ENCODE measurements at regions of chr12 and their contacts with region 1.

Region 1: DNA sequence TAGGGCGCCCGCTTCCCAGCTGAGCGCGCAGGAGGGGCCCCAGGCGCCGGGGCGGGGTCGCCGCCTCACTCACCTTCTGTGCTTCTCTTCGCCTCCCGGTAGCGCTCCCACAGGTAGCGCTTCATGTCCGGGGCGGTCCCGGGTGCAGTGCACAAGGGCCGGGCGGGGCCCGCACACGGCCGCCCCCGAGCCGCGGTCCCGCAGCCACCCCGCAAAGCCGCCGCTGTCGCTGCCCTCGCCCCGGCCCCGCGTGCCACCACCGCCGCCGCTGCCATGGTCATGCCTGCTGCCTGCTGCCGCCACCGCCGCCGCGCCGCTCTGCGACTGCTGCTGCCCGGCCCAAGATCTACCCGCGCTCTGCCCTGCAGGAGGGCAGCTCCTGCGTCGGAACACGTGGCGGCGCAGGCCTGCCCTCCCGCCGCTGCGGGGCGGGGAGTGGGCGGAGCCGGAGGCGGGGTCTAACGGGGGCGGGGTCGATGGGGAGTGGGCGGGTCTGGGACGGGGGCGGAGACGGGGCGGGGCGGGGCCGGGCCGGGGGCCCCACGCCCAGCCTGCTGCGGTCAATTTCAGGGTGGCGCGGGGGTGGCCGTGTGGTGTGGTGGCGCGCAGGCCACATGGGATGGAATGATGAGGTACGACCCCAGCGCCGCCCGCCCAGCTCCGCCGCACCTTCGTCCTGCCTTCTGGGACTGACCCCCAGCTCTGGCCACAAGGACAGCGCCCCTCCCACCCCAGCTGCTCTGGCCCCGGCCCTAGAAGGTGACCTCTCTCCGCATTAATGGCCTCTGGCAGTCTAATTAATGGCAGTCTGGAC is at the start of gene NT5DC3:
- DNase-seq: peak; percentile 75
- H3K4me3 Mint-ChIP-seq: peak within 1 kb of the TSS; percentile 90
- H3K27ac Mint-ChIP-seq: peak within 1 kb of the TSS; percentile 83
- H3K4me1 Mint-ChIP-seq: peaks cover 24% of the 10 kb centered on the region
- H3K27me3 Mint-ChIP-seq: peaks cover 24% of the 10 kb centered on the region
- total RNA-seq, gene NT5DC3: 13.2 and 14.2 TPM in 2 replicates

Region 2: GRCh38 chr12:103279444-103279843 is 561.6 kb before region 1 on chr12:
- intact Hi-C with region 1: loop called (anchors 10 kb)
- DNase-seq: peak; percentile 17
- H3K4me3 Mint-ChIP-seq: no peak overlapping the region
- H3K27ac Mint-ChIP-seq: peak overlapping the region; percentile 15
- H3K4me1 Mint-ChIP-seq: peaks cover 23% of the 10 kb centered on the region
- H3K27me3 Mint-ChIP-seq: peaks cover 14% of the 10 kb centered on the region

Region 3: GRCh38 chr12:103924761-103925641 is 83.9 kb after region 1 on chr12:
- intact Hi-C with region 1: loop called (anchors 1 kb)
- DNase-seq: peak; percentile 51
- H3K4me3 Mint-ChIP-seq: peak overlapping the region; percentile 70
- H3K27ac Mint-ChIP-seq: peak overlapping the region; percentile 81
- H3K4me1 Mint-ChIP-seq: peaks cover 50% of the 10 kb centered on the region
- H3K27me3 Mint-ChIP-seq: peaks cover 2% of the 10 kb centered on the region

Region 4: DNA sequence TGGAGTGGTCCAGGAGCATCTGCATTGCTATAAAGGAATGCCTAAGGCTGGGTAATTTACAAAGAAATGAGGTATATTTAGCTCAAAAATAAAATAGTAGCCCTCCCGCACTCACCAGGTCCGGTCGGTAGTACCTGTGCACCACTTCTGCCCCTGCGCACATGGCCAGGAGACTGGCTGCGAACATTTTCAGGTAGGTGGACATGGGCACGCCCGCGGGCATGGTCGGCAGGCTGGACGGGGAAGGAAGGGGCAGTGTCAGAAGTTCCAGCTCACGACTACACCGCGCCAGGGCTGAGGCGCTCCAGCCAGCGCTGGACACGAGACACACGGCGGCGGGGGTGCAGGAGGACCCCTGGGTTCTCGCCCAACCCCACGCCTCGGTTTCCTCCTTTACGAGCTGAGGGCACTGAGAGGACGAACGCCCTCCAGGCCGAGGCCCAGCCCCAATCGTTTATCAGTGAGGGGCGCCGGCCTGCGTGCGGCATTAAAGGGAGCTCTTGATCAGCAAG is 115.5 kb after region 1 on chr12:
- intact Hi-C with region 1: loop called (anchors 2 kb)
- DNase-seq: peak; percentile 3
- H3K4me3 Mint-ChIP-seq: peak overlapping the region; percentile 100
- H3K27ac Mint-ChIP-seq: peak overlapping the region; percentile 100
- H3K4me1 Mint-ChIP-seq: peaks cover 61% of the 10 kb centered on the region
- H3K27me3 Mint-ChIP-seq: no peaks in the 10 kb centered on the region

Region 5: DNA sequence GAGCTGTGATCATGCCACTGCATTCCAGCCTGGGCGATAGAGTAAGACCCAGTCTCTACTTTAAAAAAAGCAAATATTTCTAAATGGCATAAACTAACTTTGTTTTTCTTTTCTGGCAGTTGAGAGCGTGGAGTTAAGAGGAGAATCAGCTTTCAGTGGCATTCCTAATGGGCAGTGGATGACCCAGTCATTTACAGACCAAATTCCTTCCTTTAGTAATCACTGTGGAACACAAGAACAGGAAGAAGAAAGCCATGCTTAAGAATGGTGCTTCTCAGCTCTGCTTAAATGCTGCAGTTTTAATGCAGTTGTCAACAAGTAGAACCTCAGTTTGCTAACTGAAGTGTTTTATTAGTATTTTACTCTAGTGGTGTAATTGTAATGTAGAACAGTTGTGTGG is 145.7 kb after region 1 on chr12:
- intact Hi-C with region 1: no loop called
- DNase-seq: no peak
- H3K4me3 Mint-ChIP-seq: no peak overlapping the region
- H3K27ac Mint-ChIP-seq: no peak overlapping the region
- H3K4me1 Mint-ChIP-seq: no peaks in the 10 kb centered on the region
- H3K27me3 Mint-ChIP-seq: no peaks in the 10 kb centered on the region

Region 6: GRCh38 chr12:104012331-104012730 is 171.2 kb after region 1 on chr12:
- intact Hi-C with region 1: no loop called
- DNase-seq: no peak
- H3K4me3 Mint-ChIP-seq: no peak overlapping the region
- H3K27ac Mint-ChIP-seq: no peak overlapping the region
- H3K4me1 Mint-ChIP-seq: no peaks in the 10 kb centered on the region
- H3K27me3 Mint-ChIP-seq: peaks cover 16% of the 10 kb centered on the region

Region 7: GRCh38 chr12:104064031-104064822 is 223.1 kb after region 1 on chr12 and contains the start of gene HCFC2:
- intact Hi-C with region 1: loop called (anchors 1 kb)
- DNase-seq: peak; percentile 88
- H3K4me3 Mint-ChIP-seq: peak within 1 kb of the TSS; percentile 95
- H3K27ac Mint-ChIP-seq: peak within 1 kb of the TSS; percentile 86
- H3K4me1 Mint-ChIP-seq: peaks cover 36% of the 10 kb centered on the region
- H3K27me3 Mint-ChIP-seq: peaks cover 24% of the 10 kb centered on the region
- total RNA-seq, gene HCFC2: 8.5 and 8.9 TPM in 2 replicates

Region 8: GRCh38 chr12:104137913-104138796 is 297.1 kb after region 1 on chr12 and contains the start of gene NFYB:
- intact Hi-C with region 1: loop called (anchors 1 kb)
- DNase-seq: peak; percentile 91
- H3K4me3 Mint-ChIP-seq: peak within 1 kb of the TSS; percentile 87
- H3K27ac Mint-ChIP-seq: peak within 1 kb of the TSS; percentile 88
- H3K4me1 Mint-ChIP-seq: peaks cover 16% of the 10 kb centered on the region
- H3K27me3 Mint-ChIP-seq: peaks cover 7% of the 10 kb centered on the region
- total RNA-seq, gene NFYB: 25.0 and 25.2 TPM in 2 replicates